A673 (cell line): ENCODE measurements at regions of chr1 and their contacts with region 1.

Region 1: DNA sequence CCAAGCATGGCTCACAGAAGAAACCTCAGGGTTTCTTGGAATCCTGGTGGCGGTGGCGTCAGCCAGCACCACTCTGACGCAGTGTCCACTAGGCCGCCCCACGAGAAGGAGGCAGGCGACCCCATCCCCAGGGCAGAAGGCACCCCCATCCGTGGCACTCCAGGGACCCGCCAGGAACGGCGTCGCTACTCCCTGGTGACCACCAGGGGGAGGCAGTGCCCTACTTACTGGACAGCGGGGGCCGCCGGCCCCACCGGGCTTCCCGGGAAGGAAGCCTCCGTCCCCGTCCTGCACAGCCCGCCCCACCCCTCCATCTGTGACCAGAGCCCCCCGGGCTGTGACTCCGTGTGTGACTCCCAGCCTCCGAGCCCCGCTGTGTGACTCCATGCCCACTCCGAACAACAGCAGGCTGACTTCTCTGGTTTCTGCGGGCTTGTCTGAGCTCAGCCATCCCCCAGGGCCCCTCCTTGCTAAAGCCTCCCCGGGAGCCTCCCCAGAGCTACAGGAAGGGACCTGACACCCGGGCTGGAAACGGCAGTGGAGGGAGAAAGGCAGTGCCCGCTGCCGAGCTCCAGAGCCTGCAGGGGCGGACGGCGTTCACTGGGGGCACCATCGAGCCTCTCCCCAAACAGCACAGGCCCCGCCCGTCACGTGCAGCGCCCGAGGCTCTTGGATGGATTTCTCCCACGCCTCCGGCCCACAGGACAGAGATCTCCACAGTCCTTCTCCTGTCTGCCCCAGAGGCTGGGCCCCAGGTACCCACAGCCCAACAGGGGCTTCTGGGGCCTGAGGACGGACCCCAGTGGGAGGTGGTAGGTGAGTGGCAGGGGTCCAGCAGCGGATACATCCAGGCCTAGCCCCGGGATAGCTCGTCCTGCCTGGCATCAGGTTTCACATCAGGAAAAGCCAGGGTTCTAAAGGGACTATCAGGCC is 21.1 kb downstream of the KIF17 start:
- DNase-seq: peak; percentile 95
- H3K4me3 ChIP-seq: peak overlapping the region; percentile 54
- H3K27ac ChIP-seq: peak overlapping the region; percentile 65
- H3K4me1 ChIP-seq: peaks cover 5% of the 10 kb centered on the region
- H3K27me3 ChIP-seq: no peaks in the 10 kb centered on the region
- CTCF ChIP-seq: peak; percentile 87

Region 2: DNA sequence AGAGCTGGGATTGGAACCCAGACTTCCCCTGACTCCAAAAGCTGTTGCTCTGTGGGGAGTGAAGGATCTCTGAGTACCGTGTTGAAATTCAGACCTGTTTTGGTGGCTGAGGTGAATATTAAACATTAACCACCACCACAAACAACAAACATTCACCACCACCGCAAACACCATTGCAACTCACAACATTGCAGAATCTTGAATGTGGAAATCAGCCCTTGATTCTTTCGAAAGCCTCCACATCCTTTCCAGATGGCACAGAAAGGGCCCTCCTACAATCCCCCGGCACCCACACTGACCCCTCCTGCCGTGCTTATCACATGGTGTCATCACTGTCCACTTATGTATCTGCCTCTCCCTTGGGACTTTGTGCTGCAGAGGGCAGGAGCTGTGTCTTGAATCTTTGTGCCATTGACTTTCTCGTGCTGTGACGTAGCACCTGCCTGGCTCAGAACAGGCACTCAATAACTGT is 106.3 kb before region 1 on chr1:
- CTCF ChIA-PET with region 1: no interaction called
- POLR2A ChIA-PET with region 1: no interaction called
- intact Hi-C with region 1: no loop called
- DNase-seq: no peak
- H3K4me3 ChIP-seq: no peak overlapping the region
- H3K27ac ChIP-seq: no peak overlapping the region
- H3K4me1 ChIP-seq: peaks cover 21% of the 10 kb centered on the region
- H3K27me3 ChIP-seq: no peaks in the 10 kb centered on the region
- CTCF ChIP-seq: no peak

Region 3: GRCh38 chr1:20681999-20682398 is 14.7 kb before region 1 on chr1:
- CTCF ChIA-PET with region 1: interaction called, 13 read pairs
- POLR2A ChIA-PET with region 1: interaction called, 3 read pairs
- intact Hi-C with region 1: no loop called
- DNase-seq: no peak
- H3K4me3 ChIP-seq: no peak overlapping the region
- H3K27ac ChIP-seq: no peak overlapping the region
- H3K4me1 ChIP-seq: no peaks in the 10 kb centered on the region
- H3K27me3 ChIP-seq: no peaks in the 10 kb centered on the region
- CTCF ChIP-seq: no peak

Region 4: DNA sequence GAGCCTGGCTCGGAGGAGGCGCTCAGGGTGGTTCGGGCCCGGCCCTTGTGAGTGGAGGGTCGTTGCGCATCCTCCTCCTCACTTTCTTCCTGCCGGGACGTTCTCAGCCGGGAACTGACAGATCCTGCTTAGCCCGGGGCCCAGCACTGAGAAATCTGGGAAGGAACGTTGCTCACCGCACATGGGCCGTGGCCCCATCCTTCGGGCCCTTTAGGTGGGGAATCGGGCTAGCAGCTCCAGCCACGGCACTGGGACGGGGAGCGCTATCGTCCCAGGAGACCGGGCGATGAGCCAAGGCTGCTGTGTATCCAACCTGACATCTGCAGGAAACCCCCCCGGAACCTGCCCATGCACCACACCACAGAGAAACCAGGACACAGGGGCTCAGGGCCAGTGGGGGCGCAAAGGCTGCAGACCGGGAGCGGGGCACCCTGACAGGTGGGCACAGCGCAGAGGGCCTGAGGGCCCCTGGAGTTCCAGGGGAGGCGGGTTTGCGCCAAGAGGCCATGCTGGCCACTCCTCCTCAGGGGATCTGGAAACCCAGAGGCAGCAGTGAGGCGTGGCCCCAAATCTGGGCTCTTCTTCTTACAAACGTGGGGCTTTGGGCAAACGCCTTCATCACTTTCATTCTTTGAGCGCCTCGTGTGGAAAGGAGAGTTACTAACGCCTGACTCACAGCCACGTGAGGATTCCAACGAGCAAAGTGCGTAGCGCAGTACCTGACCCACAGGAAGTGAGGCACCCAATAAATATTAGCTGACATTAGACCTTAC is 36.1 kb after region 1 on chr1 and contains the start of gene SH2D5:
- CTCF ChIA-PET with region 1: interaction called, 3 read pairs
- POLR2A ChIA-PET with region 1: no interaction called
- intact Hi-C with region 1: loop called (anchors 2 kb)
- DNase-seq: peak; percentile 89
- H3K4me3 ChIP-seq: peak within 1 kb of the TSS; percentile 47
- H3K27ac ChIP-seq: no peak within 1 kb of the TSS
- H3K4me1 ChIP-seq: peaks cover 12% of the 10 kb centered on the region
- H3K27me3 ChIP-seq: peaks cover 5% of the 10 kb centered on the region
- CTCF ChIP-seq: peak; percentile 52
- total RNA-seq, gene SH2D5: 1.1 and 1.9 TPM in 2 replicates

Region 5: DNA sequence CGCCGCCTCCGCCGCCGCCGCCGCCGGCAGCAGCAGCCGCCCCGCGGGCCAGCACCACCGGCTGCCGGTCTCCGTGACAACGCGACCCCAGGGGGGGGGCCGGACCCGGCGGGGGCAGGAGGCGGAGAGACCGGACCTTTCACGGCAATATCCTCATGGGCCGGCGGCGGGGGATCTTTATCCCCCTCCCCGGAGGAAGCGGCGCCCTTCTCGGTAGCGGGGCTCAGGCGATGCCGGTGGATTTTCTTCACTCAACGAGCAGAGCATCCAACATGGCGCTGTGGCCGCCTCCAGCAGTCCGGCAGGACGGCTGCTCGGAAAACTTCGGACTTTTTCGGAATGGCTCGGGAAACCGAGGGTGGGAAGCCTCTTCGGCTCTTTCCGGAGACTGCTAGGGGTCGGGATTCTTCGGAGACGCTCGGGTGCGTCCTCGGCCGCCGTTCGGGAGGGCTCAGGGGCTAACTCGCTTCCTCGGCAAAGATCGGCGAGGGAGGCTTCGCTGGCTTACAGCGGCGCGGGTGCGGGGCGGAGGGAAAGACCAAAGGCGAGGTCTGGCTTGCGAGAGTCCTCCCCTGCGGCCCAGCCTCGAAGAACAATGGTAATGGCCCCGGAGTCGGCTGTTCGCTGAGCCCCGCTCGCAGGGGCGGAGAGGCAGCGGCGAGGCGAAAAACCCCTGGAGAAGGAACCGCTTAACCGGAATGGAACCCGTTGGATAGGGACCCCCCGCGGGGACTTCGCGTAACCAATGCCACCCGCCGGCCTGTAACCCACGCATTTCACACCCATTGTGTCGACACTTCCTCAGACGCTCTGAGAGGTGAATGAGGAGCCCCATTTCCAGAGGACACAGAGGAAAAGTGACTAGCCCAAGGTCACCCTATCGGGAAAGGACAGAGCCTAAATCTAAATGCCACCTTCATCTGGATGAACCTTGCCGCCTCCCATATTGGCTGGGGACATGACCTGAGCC is 480.2 kb after region 1 on chr1 and contains the start of gene EIF4G3:
- CTCF ChIA-PET with region 1: interaction called, 10 read pairs
- POLR2A ChIA-PET with region 1: no interaction called
- intact Hi-C with region 1: no loop called
- DNase-seq: peak; percentile 99
- H3K4me3 ChIP-seq: peak within 1 kb of the TSS; percentile 83
- H3K27ac ChIP-seq: peak within 1 kb of the TSS; percentile 78
- H3K4me1 ChIP-seq: peaks cover 12% of the 10 kb centered on the region
- H3K27me3 ChIP-seq: no peaks in the 10 kb centered on the region
- CTCF ChIP-seq: no peak
- total RNA-seq, gene EIF4G3: 84.7 and 86.8 TPM in 2 replicates

Region 6: DNA sequence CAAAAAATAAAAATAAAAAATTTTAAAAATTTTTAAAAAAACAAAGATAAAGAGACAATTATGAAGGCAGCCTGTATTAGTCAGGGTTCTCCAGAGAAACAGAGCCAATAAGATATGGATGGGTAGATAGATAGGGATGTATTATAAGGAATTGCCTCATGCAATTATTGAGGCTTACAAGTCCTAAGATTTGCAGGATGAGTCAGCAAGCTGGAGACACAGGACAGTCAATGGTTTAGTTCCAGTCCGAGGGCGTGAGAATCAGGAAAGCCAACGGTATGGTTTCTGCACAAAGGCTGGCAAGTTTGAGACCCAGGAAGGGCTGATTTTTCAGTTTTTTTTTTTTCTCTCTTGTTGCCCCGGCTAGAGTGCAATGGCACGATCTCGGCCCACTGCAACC is 504.1 kb after region 1 on chr1:
- CTCF ChIA-PET with region 1: interaction called, 45 read pairs
- POLR2A ChIA-PET with region 1: no interaction called
- intact Hi-C with region 1: loop called (anchors 1 kb)
- DNase-seq: peak; percentile 39
- H3K4me3 ChIP-seq: no peak overlapping the region
- H3K27ac ChIP-seq: no peak overlapping the region
- H3K4me1 ChIP-seq: no peaks in the 10 kb centered on the region
- H3K27me3 ChIP-seq: no peaks in the 10 kb centered on the region
- CTCF ChIP-seq: no peak